Prostate gland (tissue), 2 donors: ENCODE measurements at regions of chr1 and their contacts with region 1.

Region 1: GRCh38 chr1:29793101-29793546 is 556.8 kb downstream of the PTPRU start:
- DNase-seq: peak; percentile 82
- H3K4me3 ChIP-seq: no peak overlapping the region
- H3K27ac ChIP-seq: no peak overlapping the region
- H3K4me1 ChIP-seq: no peaks in the 10 kb centered on the region
- H3K27me3 ChIP-seq: no peaks in the 10 kb centered on the region
- CTCF ChIP-seq: peak in 3 of 4 experiments; percentile 53 to 86 (median 71)
- POLR2A ChIP-seq: no peak

Region 2: GRCh38 chr1:29632806-29633615 is 160.1 kb before region 1 on chr1:
- intact Hi-C with region 1: no loop called
- DNase-seq: no peak
- H3K4me3 ChIP-seq: no peak overlapping the region
- H3K27ac ChIP-seq: no peak overlapping the region
- H3K4me1 ChIP-seq: no peaks in the 10 kb centered on the region
- H3K27me3 ChIP-seq: peaks cover 2% of the 10 kb centered on the region
- CTCF ChIP-seq: no peak
- POLR2A ChIP-seq: no peak

Region 3: DNA sequence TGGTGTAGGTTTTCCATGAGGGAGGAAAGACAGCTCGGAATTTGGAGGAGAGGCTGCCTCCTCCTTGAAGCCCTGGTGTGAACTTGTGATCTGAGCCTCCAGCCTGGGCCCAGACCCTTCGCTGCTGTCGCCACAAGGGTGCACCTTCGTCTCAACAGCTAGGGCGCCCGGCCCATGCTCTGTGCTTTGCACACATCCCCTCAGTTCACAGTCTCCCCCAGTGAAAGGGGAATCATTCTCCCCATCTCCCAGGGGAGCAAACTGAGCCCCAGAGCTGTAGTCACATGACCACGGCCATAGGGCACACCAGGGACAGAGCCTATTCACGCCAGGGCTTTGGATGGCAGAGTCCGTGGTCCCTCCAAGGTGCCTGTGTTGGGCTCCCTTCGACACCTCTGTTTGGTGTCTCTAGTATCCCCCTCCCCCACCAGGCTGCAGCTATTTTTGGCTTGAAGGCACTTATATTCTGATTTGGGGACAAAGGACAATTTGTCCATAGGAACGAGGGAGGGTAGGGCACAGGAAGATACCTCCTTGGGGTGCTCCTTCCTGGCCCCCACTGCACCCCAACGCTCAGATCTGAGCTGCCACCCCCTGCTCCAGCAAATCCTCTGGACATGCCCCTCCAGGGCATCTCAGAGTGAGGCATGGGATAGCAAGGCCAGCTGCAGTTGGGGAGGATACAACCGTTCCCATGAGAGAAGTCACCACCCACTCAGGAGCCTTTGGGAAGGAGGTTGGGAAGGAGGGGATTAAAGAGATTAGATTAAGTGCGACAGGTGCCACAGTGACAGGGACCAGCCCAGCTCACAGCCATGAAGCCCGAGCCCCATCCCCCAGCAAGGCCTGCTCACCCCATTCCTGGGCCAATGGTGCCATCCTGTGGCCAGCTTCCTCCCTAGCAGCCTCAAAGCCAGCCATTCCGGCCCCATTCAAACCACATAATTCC is 914.6 kb after region 1 on chr1:
- intact Hi-C with region 1: loop called (anchors 5 kb)
- DNase-seq: peak; percentile 67
- H3K4me3 ChIP-seq: no peak overlapping the region
- H3K27ac ChIP-seq: no peak overlapping the region
- H3K4me1 ChIP-seq: no peaks in the 10 kb centered on the region
- H3K27me3 ChIP-seq: no peaks in the 10 kb centered on the region
- CTCF ChIP-seq: peak in 3 of 4 experiments; percentile 79 to 96 (median 95)
- POLR2A ChIP-seq: no peak